Dorsolateral prefrontal cortex (tissue), 120 donors: ENCODE measurements at regions of chr18 and their contacts with region 1.

Region 1: DNA sequence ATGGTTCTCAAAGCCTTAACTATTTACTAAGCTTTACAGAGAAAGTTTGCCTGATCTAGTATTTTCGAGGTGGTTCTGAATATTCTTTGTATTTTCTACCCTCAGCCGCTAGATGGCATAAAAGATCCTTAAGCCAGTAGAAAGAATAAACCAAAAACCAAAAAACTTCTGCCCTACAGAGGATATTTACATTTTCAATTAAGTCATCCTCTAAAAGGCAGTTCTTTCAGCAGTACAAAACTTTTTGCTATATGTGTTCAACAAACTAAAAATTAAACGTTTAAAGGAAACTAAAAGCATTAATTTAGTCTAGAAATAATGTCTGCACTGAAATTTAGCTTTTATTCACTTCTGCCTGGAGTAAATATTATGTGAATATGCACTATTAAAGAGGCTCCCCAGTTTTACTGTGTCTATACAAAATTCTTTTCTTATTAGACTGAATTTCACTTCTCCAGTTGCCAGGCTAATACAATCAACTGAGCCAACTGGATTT is 297.5 kb downstream of the PIEZO2 start:
- DNase-seq: no peak
- H3K4me3 ChIP-seq: no peak overlapping the region
- H3K27ac ChIP-seq: peak overlapping the region in 8 of 59 donors; percentile 4 to 65 (median 34)
- H3K27me3 ChIP-seq: peaks cover 0 to 7% (median 0%) of the 10 kb centered on the region in 45 donors
- CTCF ChIP-seq: peak; percentile 60 to 91 (median 81)

Region 2: DNA sequence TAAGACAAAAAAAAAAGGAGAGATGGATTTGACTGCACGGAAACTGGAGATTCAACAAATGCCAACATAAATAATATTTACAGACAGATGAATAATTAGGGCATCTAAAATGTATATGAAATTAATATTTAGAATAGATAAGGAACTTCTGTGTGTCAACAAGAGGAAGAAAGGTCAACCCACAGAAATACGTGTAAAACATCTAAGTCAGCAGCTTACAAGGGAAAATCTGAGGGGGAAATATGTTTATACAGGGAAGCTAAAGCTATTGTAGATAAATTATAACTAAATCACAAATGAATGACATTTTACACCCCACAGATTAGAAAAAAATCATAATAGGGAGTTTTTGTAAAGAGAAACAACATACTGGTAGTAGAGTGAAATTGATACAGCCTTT is 137.6 kb after region 1 on chr18:
- intact Hi-C with region 1: no loop called
- DNase-seq: no peak
- H3K4me3 ChIP-seq: no peak overlapping the region
- H3K27ac ChIP-seq: no peak overlapping the region
- H3K27me3 ChIP-seq: no peaks in the 10 kb centered on the region
- CTCF ChIP-seq: no peak

Region 3: GRCh38 chr18:11040823-11041656 is 189.2 kb after region 1 on chr18:
- intact Hi-C with region 1: loop called (anchors 2 to 5 kb)
- DNase-seq: peak in 4 of 10 donors; percentile 12 to 64 (median 47)
- H3K4me3 ChIP-seq: peak overlapping the region in 51 of 59 donors; percentile 1 to 61 (median 34)
- H3K27ac ChIP-seq: peak overlapping the region in 56 of 59 donors; percentile 11 to 92 (median 76)
- H3K27me3 ChIP-seq: no peaks in the 10 kb centered on the region
- CTCF ChIP-seq: peak; percentile 49 to 92 (median 80)

Region 4: DNA sequence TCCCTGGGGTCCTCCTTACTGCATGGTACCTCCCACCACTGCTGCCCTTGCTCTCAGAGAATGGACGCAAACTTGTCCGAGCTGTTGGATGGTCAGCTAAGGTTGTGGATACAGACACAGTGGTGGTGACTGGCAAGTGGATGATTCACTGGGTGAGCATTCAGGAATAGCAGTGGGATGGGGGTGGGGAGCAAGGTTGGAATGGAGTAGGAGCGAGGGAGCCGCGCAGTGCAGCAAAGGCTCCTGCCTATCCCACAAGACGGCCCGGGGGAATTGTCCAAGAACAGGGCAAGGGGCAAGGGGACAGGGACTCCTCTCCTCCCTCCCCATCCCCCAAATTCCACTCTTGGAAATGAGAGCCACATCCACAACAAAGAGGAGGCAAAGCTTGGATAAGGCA is 195.3 kb after region 1 on chr18:
- intact Hi-C with region 1: loop called in 1 of 2 experiments (anchors 5 kb)
- DNase-seq: no peak
- H3K4me3 ChIP-seq: no peak overlapping the region
- H3K27ac ChIP-seq: peak overlapping the region in 1 of 59 donors; percentile 11
- H3K27me3 ChIP-seq: no peaks in the 10 kb centered on the region
- CTCF ChIP-seq: no peak

Region 5: GRCh38 chr18:11149441-11150270 is 297.8 kb after region 1 on chr18 and contains the start of gene PIEZO2:
- intact Hi-C with region 1: loop called (anchors 2 to 5 kb)
- DNase-seq: peak in 9 of 10 donors; percentile 49 to 90 (median 76)
- H3K4me3 ChIP-seq: peak within 1 kb of the TSS; percentile 39 to 82 (median 64)
- H3K27ac ChIP-seq: peak within 1 kb of the TSS in 53 of 59 donors; percentile 31 to 94 (median 83)
- H3K27me3 ChIP-seq: peaks cover 0 to 79% (median 47%) of the 10 kb centered on the region in 45 donors
- CTCF ChIP-seq: peak in 26 of 56 donors; percentile 7 to 50 (median 25)
- total RNA-seq, gene PIEZO2: 3.3 to 115 (median 29.1) TPM

Region 6: DNA sequence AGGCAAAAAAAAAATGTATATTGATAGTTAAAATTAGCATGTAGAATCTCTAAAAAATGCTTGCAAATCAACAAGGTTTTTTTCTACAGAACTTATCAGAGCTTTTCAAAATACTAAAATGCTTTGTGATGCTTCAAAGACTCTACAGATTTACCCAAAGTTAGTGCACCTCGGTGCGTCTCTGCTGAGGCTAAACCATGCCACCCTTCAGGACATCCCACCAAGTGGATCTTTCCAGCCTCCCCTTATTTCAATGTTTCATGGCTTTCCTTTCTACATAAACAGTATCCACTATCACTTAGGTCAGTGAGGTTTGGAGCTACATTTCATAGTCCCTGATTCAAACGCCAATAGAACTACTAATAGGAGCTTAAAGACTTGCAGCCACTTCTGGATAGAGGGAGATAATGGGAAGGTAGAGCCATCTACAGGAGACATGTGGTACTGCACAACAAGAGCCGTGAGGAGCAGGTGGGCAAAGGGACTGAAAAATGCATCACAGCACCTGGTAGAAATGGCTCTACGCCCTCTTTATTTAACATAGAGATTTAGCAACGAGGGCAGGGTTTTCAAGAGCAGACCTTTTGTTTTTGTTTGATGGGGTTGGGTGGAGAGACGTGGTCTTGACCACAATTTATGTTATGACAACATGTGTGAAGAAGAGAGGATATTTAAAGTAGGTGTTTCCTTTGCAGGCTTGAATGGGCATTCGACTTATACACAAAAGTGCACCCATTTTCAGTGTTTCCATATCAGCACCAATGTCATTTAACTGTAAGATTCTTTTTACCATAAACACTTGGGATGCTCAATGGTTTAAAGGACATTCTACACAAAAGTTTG is 701.4 kb after region 1 on chr18:
- intact Hi-C with region 1: loop called in 1 of 2 experiments (anchors 10 kb)
- DNase-seq: peak in 2 of 10 donors; percentile 6 to 31
- H3K4me3 ChIP-seq: no peak overlapping the region
- H3K27ac ChIP-seq: no peak overlapping the region
- H3K27me3 ChIP-seq: peaks cover 0 to 21% (median 0%) of the 10 kb centered on the region in 45 donors
- CTCF ChIP-seq: peak; percentile 44 to 95 (median 89)